OCI-LY7 (cell line): ENCODE measurements at regions of chr1 and their contacts with region 1.

Region 1: GRCh38 chr1:111507411-111508201 is 4.2 kb upstream of the ADORA3 start:
- DNase-seq: peak; percentile 97
- H3K4me3 ChIP-seq: peak overlapping the region; percentile 63
- H3K27ac ChIP-seq: peak overlapping the region; percentile 97
- H3K4me1 ChIP-seq: peaks cover 75% of the 10 kb centered on the region
- CTCF ChIP-seq: no peak

Region 2: DNA sequence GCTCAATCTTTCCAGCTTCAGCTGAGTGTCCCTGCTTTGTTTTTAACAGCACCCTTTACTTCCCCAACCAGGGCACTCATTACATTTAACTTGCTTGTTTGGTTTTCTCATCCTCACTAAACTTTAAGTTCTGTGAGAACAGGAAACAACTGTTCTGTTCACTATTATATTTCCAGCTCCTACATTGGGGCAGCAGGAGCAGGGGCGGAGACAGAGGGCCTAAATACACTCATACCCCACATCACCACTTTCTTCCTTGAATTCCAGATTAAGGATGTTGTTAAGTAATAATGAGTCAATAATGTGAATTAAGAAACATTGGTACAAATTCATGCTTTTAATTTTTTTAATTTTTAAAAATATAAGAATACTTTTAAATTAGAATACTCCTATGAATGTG is 373.7 kb before region 1 on chr1:
- CTCF ChIA-PET with region 1: no interaction called
- POLR2A ChIA-PET with region 1: no interaction called
- intact Hi-C with region 1: loop called (anchors 5 kb)
- DNase-seq: no peak
- H3K4me3 ChIP-seq: no peak overlapping the region
- H3K27ac ChIP-seq: peak overlapping the region; percentile 98
- H3K4me1 ChIP-seq: peaks cover 83% of the 10 kb centered on the region
- CTCF ChIP-seq: no peak

Region 3: DNA sequence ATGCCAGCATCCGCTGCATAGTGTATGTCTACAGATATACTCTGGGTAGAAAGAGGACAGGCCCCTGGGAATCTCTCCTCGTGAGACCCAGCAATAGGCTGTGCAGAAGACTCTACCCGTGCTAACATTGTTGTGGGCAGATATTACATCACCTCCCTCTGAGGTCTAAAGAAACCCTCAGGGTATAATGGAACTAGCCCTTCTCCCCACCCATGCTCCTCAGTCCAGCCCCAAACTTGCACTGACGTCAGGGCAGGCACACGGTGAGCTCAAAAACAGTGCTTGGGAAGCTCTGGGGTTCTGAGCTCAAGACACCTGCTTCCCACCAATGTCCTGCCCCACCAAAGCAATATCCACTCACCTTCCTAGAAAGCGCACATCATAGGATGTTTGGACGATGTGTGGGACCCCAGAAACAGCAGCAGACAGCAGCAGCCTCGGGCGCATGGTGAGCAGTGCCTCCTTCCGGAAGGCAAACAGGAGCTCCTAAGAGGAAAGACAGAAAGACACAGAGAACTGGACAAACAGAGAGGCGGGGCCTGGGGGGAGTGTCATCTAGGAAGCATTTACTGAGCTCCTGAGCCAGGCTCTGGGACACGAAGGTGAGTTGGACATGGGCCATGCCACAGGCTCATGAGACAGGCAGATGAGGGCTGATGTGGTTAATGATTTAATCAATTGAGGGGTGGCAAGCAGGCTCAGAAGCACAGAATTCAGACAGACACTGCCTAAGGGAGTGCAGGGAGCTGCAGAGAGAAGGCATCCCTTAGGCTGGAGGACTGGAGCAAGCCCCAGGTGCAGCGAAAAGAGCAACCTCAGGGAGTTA is 84.8 kb before region 1 on chr1:
- CTCF ChIA-PET with region 1: no interaction called
- POLR2A ChIA-PET with region 1: no interaction called
- intact Hi-C with region 1: no loop called
- DNase-seq: no peak
- H3K4me3 ChIP-seq: no peak overlapping the region
- H3K27ac ChIP-seq: no peak overlapping the region
- H3K4me1 ChIP-seq: peaks cover 11% of the 10 kb centered on the region
- CTCF ChIP-seq: no peak

Region 4: DNA sequence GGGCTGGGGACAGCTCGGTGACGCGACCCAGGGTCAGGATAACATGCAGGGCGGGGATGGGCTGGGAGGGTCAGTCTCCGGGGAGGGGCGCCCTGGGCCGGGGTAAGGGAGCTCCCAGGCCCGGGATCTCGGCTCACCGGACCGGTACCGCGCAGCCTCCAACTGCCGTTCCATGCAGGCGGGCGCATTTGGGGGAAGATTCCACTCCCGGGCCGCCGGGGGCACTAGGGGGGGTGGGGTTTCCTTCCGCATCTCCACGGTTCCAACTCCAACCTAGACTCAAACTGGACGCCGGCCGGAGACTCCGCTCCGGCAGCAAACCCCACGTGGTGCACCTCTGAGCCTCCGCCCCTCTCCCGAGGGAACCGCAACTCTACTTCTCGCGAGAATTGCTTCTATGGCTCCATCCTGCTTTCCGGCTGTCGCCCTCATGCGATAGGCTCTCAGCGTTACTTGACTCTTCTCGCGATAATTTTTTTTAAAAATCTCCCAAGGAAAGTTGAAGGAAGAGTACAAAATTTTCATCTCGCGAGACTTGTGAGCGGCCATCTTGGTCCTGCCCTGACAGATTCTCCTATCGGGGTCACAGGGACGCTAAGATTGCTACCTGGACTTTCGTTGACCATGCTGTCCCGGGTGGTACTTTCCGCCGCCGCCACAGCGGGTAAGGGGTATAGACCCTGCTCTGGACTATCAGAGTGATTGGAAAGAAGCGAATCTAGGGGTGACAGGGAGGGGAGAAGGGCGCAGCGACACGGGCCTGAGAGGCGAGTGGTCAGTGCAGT is 58.5 kb before region 1 on chr1 and contains the starts of genes ATP5PB and WDR77:
- CTCF ChIA-PET with region 1: no interaction called
- POLR2A ChIA-PET with region 1: interaction called, 10 read pairs
- intact Hi-C with region 1: loop called (anchors 2 kb)
- DNase-seq: peak; percentile 100
- H3K4me3 ChIP-seq: peak within 1 kb of the TSS; percentile 98
- H3K27ac ChIP-seq: peak within 1 kb of the TSS; percentile 39
- H3K4me1 ChIP-seq: peaks cover 32% of the 10 kb centered on the region
- CTCF ChIP-seq: no peak
- total RNA-seq, gene ATP5PB: 286 and 291 TPM in 2 replicates
- total RNA-seq, gene WDR77: 63.0 and 97.3 TPM in 2 replicates

Region 5: GRCh38 chr1:111497592-111497991 is 10.0 kb before region 1 on chr1:
- CTCF ChIA-PET with region 1: interaction called, 6 read pairs
- POLR2A ChIA-PET with region 1: interaction called, 18 read pairs
- intact Hi-C with region 1: no loop called
- DNase-seq: no peak
- H3K4me3 ChIP-seq: no peak overlapping the region
- H3K27ac ChIP-seq: no peak overlapping the region
- H3K4me1 ChIP-seq: peaks cover under 1% of the 10 kb centered on the region
- CTCF ChIP-seq: no peak

Region 6: GRCh38 chr1:111603979-111604378 is 96.4 kb after region 1 on chr1:
- CTCF ChIA-PET with region 1: interaction called, 6 read pairs
- POLR2A ChIA-PET with region 1: interaction called, 14 read pairs
- intact Hi-C with region 1: loop called (anchors 1 kb)
- DNase-seq: peak; percentile 77
- H3K4me3 ChIP-seq: no peak overlapping the region
- H3K27ac ChIP-seq: peak overlapping the region; percentile 75
- H3K4me1 ChIP-seq: peaks cover 64% of the 10 kb centered on the region
- CTCF ChIP-seq: no peak

Region 7: DNA sequence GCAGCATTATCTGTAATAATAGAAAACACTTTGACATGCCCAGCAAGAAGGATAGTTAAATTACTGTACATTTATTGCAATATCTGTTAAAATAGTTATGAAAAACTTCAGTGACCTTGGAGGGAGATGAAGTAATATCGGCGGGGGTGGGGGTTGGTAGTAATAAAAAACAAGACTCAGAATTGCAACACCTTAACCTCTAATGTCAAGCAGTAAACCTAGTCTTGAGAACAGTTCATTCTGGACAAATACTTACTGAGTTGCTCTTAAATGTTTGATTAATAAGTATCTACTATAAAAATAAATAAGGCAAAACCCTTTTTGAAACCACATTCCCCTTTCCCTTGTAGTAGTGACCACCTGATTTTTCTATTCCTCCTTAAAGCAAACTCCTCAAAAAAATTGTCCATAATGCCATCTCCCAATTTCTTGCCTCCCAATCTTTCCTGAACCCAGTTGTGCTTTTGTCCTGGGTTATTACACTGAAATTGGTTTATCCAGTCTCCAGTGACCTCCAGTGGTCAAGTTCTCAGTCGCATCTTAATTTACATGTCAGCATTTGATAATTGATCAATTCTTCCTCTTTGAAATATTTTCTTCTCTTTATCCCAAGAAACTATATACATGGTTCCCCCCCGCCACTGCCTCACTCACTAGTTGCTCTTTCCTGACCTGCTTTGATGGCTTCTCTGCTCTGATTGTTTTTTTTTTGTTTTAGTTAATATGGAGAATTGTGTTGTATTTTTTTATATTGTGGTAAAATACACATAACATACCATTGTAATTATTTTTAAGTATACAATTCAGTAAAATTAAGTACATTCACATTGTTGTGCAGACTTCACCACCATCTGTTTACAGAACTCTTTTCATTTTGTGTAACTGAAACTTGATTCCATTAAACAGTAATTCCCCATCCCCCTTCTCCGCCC is 148.7 kb after region 1 on chr1:
- CTCF ChIA-PET with region 1: interaction called, 4 read pairs
- POLR2A ChIA-PET with region 1: no interaction called
- intact Hi-C with region 1: loop called (anchors 1 kb)
- DNase-seq: peak; percentile 48
- H3K4me3 ChIP-seq: no peak overlapping the region
- H3K27ac ChIP-seq: no peak overlapping the region
- H3K4me1 ChIP-seq: peaks cover 13% of the 10 kb centered on the region
- CTCF ChIP-seq: peak; percentile 86

Region 8: DNA sequence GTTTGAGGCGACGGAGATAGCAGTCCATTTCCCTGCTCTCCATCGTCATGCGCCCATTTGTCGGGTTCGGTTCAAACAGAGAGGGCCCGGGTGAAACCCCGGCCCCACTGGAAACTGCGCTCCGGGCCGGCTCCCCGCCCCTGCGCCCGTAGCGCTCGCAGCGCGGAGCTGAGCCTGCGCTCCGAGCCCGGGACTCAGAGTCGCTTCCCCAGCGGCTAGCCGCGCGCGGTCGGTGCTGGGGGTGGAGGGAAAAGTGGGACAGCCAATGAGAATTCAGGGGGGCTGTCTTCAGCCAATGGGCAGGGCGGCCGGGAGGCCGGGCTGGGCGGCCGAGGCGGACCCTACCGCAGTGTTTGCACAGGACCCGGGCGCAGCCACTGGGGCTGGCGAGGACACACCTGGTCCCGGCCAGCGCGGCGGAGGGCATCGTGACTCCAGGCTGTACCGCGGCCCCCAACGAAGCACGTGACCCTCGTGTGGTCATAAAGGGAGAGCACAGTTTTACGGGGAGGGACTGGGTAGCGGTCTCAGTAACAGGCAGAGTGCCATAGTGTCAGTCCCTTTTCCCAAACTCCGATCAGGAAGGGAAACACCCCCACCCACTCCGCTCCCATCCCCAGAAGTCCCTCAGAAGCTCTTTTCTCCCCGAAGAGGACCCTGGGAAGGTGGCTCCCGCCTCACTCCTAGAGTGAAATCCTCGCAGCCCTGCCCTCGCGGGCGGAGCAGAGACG is 231.8 kb after region 1 on chr1 and contains the start of gene INKA2:
- CTCF ChIA-PET with region 1: no interaction called
- POLR2A ChIA-PET with region 1: interaction called, 16 read pairs
- intact Hi-C with region 1: loop called (anchors 5 kb)
- DNase-seq: peak; percentile 87
- H3K4me3 ChIP-seq: peak within 1 kb of the TSS; percentile 78
- H3K27ac ChIP-seq: peak within 1 kb of the TSS; percentile 44
- H3K4me1 ChIP-seq: peaks cover 32% of the 10 kb centered on the region
- CTCF ChIP-seq: no peak; the same call in 1 of the 2 replicates
- total RNA-seq, gene INKA2: 3.9 and 4.1 TPM in 2 replicates